ENCODE measurements at regions of chr5 and their contacts with region 1.

Region 1: GRCh38 chr5:96331210-96331609 is 101.8 kb downstream of the PCSK1 start:
- DNase-seq: no peak
- ATAC-seq: no peak
- H3K4me3 ChIP-seq: no peak overlapping the region
- H3K27ac ChIP-seq: peak overlapping the region in 1 of 10 donors; percentile 26
- H3K4me1 ChIP-seq: peaks cover 0 to 20% (median 4%) of the 10 kb centered on the region in 9 donors
- H3K27me3 ChIP-seq: no peaks in the 10 kb centered on the region
- CTCF ChIP-seq: no peak

Region 2: GRCh38 chr5:95864944-95865504 is 466.2 kb before region 1 on chr5:
- intact Hi-C with region 1: loop called in 3 of 10 experiments (anchors 1 to 5 kb)
- DNase-seq: no peak
- ATAC-seq: peak in 1 of 8 donors; percentile 18
- H3K4me3 ChIP-seq: no peak overlapping the region
- H3K27ac ChIP-seq: peak overlapping the region in 1 of 10 donors; percentile 29
- H3K4me1 ChIP-seq: peaks cover 3 to 75% (median 25%) of the 10 kb centered on the region in 9 donors
- H3K27me3 ChIP-seq: no peaks in the 10 kb centered on the region
- CTCF ChIP-seq: no peak